Aorta (tissue), 5 donors: ENCODE measurements at regions of chr1 and their contacts with region 1.

Region 1: DNA sequence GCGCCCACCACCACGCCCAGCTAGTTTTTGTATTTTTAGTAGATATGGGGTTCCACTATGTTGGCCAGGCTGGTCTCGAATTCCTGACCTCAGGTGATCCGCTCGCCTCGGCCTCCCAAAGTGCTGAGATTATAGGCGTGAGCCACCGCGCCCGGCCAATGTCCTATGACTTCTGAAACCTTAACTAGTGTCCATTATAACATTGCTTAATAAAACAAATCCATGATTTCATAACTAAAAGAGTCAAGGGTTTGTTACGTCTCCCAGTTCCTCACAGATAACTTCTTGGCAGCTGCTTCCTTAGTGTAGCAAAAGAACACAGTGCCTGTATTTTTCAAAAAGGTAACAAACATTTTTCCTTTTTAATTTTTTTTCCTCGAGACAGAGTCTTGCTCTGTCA is 53.6 kb downstream of the FBXO42 start:
- DNase-seq: no peak
- ATAC-seq: no peak
- H3K4me3 ChIP-seq: no peak overlapping the region
- H3K27ac ChIP-seq: peak overlapping the region; percentile 4 to 70
- H3K4me1 ChIP-seq: peaks cover 7 to 9% of the 10 kb centered on the region in 2 donors
- H3K27me3 ChIP-seq: no peaks in the 10 kb centered on the region

Region 2: DNA sequence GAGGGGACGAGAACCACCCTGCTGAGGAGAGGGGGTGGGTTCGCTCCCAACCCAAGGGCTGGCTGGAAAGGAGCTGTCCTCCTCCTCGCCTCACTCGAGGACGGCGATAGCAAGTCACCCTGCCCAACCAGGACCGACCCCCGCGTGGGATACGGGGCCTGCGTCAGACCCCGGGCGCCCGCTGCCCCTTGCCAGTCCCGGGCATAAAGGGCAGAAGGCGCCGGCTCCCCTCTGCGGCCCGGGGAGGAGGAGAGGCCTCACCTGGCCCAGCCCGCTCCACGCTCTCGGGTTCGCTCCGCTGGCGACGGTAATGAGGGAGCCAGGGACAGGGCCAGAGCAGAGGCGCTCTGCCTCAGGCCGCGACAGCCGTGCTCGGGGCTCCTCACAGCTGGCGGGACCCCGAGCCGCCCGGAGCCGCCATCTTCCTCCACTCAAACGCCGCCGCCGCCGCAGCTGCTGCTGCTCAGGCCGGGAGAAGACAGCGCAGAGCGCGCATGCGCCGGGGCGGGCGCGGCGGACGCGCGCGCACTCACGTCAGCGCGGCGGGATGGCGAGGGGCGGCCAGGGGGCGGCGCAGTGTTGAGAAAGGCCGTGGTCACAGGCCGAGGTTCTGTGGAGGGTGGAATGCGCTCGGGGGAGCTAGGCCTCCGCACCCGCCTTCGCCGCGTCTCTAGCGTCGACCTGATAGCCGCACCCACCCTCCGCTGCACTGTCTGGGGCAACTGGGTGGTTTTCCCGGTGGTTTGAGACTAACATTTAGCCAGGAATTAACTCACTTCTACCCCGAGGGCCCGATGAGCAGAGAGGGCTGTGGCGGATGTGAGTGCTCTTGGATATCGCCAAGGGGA is 53.6 kb after region 1 on chr1 and contains the start of gene FBXO42:
- intact Hi-C with region 1: loop called (anchors 5 kb)
- DNase-seq: peak; percentile 95 to 97
- ATAC-seq: peak; percentile 96
- H3K4me3 ChIP-seq: peak within 1 kb of the TSS; percentile 35 to 96
- H3K27ac ChIP-seq: peak within 1 kb of the TSS; percentile 57 to 74
- H3K4me1 ChIP-seq: peaks cover 0 to 10% of the 10 kb centered on the region in 2 donors
- H3K27me3 ChIP-seq: no peaks in the 10 kb centered on the region
- total RNA-seq, gene FBXO42: 32.5 to 33.3 TPM

Region 3: GRCh38 chr1:16366722-16367257 is 68.1 kb after region 1 on chr1 and contains the start of gene SZRD1:
- intact Hi-C with region 1: no loop called
- DNase-seq: peak; percentile 97
- ATAC-seq: peak; percentile 95
- H3K4me3 ChIP-seq: peak within 1 kb of the TSS; percentile 56 to 92
- H3K27ac ChIP-seq: peak within 1 kb of the TSS; percentile 72 to 95
- H3K4me1 ChIP-seq: peaks cover 2 to 3% of the 10 kb centered on the region in 2 donors
- H3K27me3 ChIP-seq: no peaks in the 10 kb centered on the region
- total RNA-seq, gene SZRD1: 128 to 172 TPM